ENCODE measurements at regions of chr2 and their contacts with region 1.

Region 1: DNA sequence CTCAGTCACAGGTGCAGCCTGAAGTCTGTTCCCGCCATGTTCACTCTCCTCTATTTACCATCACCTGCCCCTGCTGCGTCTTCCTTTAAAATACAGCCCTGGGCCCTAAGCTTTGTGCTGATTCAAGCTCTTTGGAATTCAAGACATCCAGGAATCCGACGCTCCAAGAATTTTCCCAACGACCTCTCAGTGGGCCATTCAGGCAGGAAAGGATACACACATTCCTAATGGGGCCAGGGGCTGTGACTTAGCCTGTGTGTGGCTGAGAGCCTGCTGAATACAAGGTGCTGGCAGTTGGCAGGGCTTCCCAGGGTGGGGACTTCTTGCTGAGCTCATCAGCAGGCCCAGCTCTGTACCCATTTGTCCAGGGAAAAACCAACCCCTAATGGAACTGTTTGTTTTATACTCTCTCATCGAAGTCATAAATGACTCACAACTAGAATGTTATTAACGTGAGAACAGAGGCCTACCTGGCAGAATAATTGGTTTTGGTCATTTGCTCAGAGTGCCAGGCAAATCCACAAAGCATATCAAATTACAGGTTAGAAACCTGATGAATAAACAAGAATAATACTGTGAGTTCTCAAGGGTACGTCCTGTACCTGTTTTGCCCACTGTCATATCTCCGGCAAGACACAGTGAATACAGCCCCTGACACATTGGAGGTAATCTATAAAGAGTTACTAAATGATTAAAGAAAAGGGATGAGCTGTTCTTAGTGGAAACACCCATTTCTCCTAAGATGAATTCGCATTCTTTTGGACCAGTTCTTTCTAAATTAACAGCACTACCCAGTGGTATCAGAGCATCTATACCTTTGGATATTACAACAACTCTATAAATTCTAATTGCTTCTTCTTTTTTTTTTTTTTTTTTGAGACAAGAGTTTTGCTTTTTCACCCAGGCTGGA is 12.6 kb upstream of the KCMF1 start:
- DNase-seq: peak; percentile 87
- H3K4me3 ChIP-seq: no peak overlapping the region
- H3K27ac ChIP-seq: peak overlapping the region; percentile 63
- H3K4me1 ChIP-seq: peaks cover 28% of the 10 kb centered on the region
- H3K27me3 ChIP-seq: no peaks in the 10 kb centered on the region
- CTCF ChIP-seq: no peak
- POLR2A ChIP-seq: no peak

Region 2: GRCh38 chr2:84881581-84882414 is 76.6 kb before region 1 on chr2:
- CTCF ChIA-PET with region 1: no interaction called
- POLR2A ChIA-PET with region 1: no interaction called
- dilution Hi-C with region 1: no loop called
- intact Hi-C with region 1: no loop called
- DNase-seq: peak; percentile 82
- H3K4me3 ChIP-seq: peak overlapping the region; percentile 3 to 69 (median 15)
- H3K27ac ChIP-seq: no peak overlapping the region
- H3K4me1 ChIP-seq: peaks cover 16% of the 10 kb centered on the region
- H3K27me3 ChIP-seq: peaks cover 41% of the 10 kb centered on the region in 2 experiments
- CTCF ChIP-seq: peak; percentile 72 to 76
- POLR2A ChIP-seq: no peak

Region 3: GRCh38 chr2:84912984-84913383 is 45.4 kb before region 1 on chr2:
- CTCF ChIA-PET with region 1: no interaction called
- POLR2A ChIA-PET with region 1: no interaction called
- dilution Hi-C with region 1: no loop called
- intact Hi-C with region 1: no loop called
- DNase-seq: no peak
- H3K4me3 ChIP-seq: no peak overlapping the region
- H3K27ac ChIP-seq: no peak overlapping the region
- H3K4me1 ChIP-seq: no peaks in the 10 kb centered on the region
- H3K27me3 ChIP-seq: no peaks in the 10 kb centered on the region
- CTCF ChIP-seq: no peak
- POLR2A ChIP-seq: no peak

Region 4: GRCh38 chr2:84946204-84947009 is 12.0 kb before region 1 on chr2:
- CTCF ChIA-PET with region 1: interaction called, 9 read pairs
- POLR2A ChIA-PET with region 1: interaction called, 10 read pairs
- dilution Hi-C with region 1: no loop called
- intact Hi-C with region 1: no loop called
- DNase-seq: peak; percentile 61
- H3K4me3 ChIP-seq: no peak overlapping the region
- H3K27ac ChIP-seq: peak overlapping the region; percentile 81
- H3K4me1 ChIP-seq: peaks cover 11% of the 10 kb centered on the region
- H3K27me3 ChIP-seq: no peaks in the 10 kb centered on the region
- CTCF ChIP-seq: no peak
- POLR2A ChIP-seq: peak; percentile 33

Region 5: DNA sequence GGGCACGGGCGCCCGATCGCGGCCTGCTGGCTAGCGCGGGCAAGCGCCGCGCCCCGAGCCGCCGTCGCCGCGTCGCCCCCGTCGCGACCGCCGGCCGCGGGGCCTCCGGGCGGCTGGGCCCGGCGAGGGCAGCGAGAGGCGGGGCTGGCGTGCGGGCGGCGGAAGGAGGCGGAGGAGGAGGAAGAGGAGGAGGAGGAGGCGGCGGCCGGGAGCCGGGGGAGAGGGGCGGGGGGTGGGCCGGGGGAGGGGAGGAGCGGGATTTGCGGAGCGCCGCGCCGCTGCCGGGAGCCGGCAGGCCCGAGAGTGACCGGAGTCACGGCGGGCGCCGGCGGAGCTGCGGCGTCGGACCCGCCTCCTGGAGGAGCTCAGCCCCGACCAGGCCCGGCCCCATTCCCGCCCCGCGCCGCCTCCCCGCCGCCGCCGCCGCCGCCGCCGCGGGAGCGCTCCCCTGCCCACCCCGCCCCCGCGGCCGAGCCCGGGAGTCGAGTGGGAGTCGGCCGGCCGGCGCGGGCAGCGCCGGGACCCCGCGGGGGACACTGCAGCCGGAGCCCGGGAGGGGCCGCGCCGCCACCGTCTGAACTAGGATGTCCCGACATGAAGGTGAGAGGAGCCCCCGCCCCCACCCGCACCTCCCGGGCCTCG is 12.6 kb after region 1 on chr2 and contains the start of gene KCMF1:
- CTCF ChIA-PET with region 1: interaction called, 8 read pairs
- POLR2A ChIA-PET with region 1: interaction called, 14 read pairs
- dilution Hi-C with region 1: no loop called
- intact Hi-C with region 1: loop called (anchors 1 kb)
- DNase-seq: peak; percentile 30
- H3K4me3 ChIP-seq: peak within 1 kb of the TSS; percentile 92 to 98 (median 97)
- H3K27ac ChIP-seq: peak within 1 kb of the TSS; percentile 96
- H3K4me1 ChIP-seq: peaks cover 18% of the 10 kb centered on the region
- H3K27me3 ChIP-seq: no peaks in the 10 kb centered on the region
- CTCF ChIP-seq: no peak
- POLR2A ChIP-seq: no peak
- total RNA-seq, gene KCMF1: 75.9 and 78.4 TPM in 2 replicates

Region 6: DNA sequence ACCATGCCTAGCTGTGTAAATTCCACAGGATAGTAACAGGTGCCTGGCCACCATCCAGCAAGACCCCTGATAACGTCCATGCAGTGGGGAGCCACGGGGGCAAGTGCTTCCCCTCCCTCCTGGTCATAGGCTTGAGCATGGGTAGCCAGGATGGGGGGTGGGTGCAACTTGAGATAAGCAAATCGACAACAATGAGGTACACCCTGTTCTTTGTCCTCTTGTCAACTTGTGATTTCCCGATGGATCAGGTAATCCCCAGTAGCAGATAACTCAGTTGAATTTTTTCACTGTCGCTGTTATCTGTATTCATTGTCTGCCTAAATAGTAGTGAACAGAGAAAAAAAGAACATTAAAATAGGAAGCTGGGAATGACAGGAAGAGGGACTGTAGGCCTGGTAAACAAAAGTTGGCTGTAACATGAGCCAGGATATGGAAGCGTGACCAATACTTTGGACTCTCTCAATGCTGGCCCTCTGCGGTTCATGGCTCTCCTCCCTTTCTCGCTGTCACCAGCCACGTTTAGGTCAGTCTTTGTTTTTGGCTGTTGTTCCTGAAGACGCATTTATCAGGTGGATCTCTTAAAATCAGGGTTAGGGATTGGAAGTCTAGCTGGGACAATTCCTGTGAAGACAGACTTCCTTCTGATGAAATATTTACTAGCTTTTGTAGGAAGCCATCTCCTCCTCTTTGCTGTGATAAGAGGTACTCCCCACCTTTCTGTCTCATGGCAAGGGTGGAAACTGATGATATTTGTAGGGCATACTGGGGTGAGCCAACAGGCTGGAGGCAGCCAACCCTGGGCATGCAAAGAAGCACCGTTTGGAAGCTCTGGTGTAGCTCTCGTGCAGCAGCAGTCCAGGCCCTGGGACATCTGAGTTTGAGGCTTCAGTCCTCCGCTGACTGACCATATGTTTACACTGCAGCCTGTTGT is 217.2 kb after region 1 on chr2:
- CTCF ChIA-PET with region 1: no interaction called
- POLR2A ChIA-PET with region 1: no interaction called
- dilution Hi-C with region 1: no loop called
- intact Hi-C with region 1: no loop called
- DNase-seq: peak; percentile 81
- H3K4me3 ChIP-seq: no peak overlapping the region
- H3K27ac ChIP-seq: peak overlapping the region; percentile 36
- H3K4me1 ChIP-seq: peaks cover 52% of the 10 kb centered on the region
- H3K27me3 ChIP-seq: no peaks in the 10 kb centered on the region
- CTCF ChIP-seq: no peak
- POLR2A ChIP-seq: no peak

Measured in endothelial cell of umbilical vein (primary cell).